ENCODE measurements at regions of chr2 and their contacts with region 1.

Region 1: DNA sequence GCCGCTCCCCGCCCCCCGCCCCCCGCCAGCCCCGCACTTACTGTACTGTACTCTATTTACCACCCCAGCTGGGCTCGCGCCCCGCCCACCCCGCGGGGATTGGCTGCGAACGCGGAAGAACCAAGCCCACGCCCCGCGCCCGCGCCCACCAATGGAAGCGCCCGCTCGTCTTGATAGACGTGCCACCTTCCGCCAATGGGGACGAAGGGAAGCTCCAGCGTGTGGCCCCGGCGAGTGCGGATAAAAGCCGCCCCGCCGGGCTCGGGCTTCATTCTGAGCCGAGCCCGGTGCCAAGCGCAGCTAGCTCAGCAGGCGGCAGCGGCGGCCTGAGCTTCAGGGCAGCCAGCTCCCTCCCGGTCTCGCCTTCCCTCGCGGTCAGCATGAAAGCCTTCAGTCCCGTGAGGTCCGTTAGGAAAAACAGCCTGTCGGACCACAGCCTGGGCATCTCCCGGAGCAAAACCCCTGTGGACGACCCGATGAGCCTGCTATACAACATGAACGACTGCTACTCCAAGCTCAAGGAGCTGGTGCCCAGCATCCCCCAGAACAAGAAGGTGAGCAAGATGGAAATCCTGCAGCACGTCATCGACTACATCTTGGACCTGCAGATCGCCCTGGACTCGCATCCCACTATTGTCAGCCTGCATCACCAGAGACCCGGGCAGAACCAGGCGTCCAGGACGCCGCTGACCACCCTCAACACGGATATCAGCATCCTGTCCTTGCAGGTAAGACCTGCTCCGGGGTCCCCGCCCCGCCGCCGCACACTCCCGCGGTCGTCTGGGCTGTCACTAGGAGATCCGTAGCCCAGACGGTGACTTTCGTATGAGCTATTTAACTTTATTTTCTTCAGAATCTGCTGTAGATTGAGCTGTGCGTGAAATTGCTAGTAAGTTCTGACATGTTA is at the start of gene ID2:
- DNase-seq: peak; percentile 100
- H3K4me3 ChIP-seq: peak within 1 kb of the TSS; percentile 97
- H3K27ac ChIP-seq: peak within 1 kb of the TSS; percentile 91
- H3K4me1 ChIP-seq: peaks cover 39% of the 10 kb centered on the region
- CTCF ChIP-seq: no peak
- total RNA-seq, gene ID2: 439 and 498 TPM in 2 replicates

Region 2: GRCh38 chr2:7097348-7097895 is 1584.6 kb before region 1 on chr2:
- CTCF ChIA-PET with region 1: no interaction called
- POLR2A ChIA-PET with region 1: no interaction called
- intact Hi-C with region 1: loop called (anchors 5 kb)
- DNase-seq: peak; percentile 70
- H3K4me3 ChIP-seq: peak overlapping the region; percentile 49
- H3K27ac ChIP-seq: no peak overlapping the region
- H3K4me1 ChIP-seq: peaks cover 8% of the 10 kb centered on the region
- CTCF ChIP-seq: peak; percentile 99

Region 3: GRCh38 chr2:7633566-7634153 is 1048.4 kb before region 1 on chr2:
- CTCF ChIA-PET with region 1: no interaction called
- POLR2A ChIA-PET with region 1: no interaction called
- intact Hi-C with region 1: loop called (anchors 10 kb)
- DNase-seq: peak; percentile 25
- H3K4me3 ChIP-seq: no peak overlapping the region
- H3K27ac ChIP-seq: peak overlapping the region; percentile 62
- H3K4me1 ChIP-seq: peaks cover 34% of the 10 kb centered on the region
- CTCF ChIP-seq: no peak

Region 4: GRCh38 chr2:8119782-8120505 is 562.1 kb before region 1 on chr2:
- CTCF ChIA-PET with region 1: no interaction called
- POLR2A ChIA-PET with region 1: no interaction called
- intact Hi-C with region 1: loop called (anchors 5 kb)
- DNase-seq: no peak
- H3K4me3 ChIP-seq: no peak overlapping the region
- H3K27ac ChIP-seq: no peak overlapping the region
- H3K4me1 ChIP-seq: peaks cover 28% of the 10 kb centered on the region
- CTCF ChIP-seq: no peak

Region 5: GRCh38 chr2:8514796-8515758 is 167.0 kb before region 1 on chr2:
- CTCF ChIA-PET with region 1: no interaction called
- POLR2A ChIA-PET with region 1: interaction called, 21 read pairs
- intact Hi-C with region 1: no loop called
- DNase-seq: peak; percentile 88
- H3K4me3 ChIP-seq: peak overlapping the region; percentile 47
- H3K27ac ChIP-seq: peak overlapping the region; percentile 95
- H3K4me1 ChIP-seq: peaks cover 68% of the 10 kb centered on the region
- CTCF ChIP-seq: no peak

Region 6: GRCh38 chr2:8551622-8552074 is 130.4 kb before region 1 on chr2:
- CTCF ChIA-PET with region 1: no interaction called
- POLR2A ChIA-PET with region 1: interaction called, 46 read pairs
- intact Hi-C with region 1: no loop called
- DNase-seq: peak; percentile 78
- H3K4me3 ChIP-seq: peak overlapping the region; percentile 62
- H3K27ac ChIP-seq: peak overlapping the region; percentile 98
- H3K4me1 ChIP-seq: peaks cover 97% of the 10 kb centered on the region
- CTCF ChIP-seq: no peak; the same call in 1 of the 2 replicates

Region 7: GRCh38 chr2:8633735-8634313 is 48.2 kb before region 1 on chr2:
- CTCF ChIA-PET with region 1: no interaction called
- POLR2A ChIA-PET with region 1: interaction called, 29 read pairs
- intact Hi-C with region 1: loop called (anchors 1 kb)
- DNase-seq: no peak
- H3K4me3 ChIP-seq: no peak overlapping the region
- H3K27ac ChIP-seq: no peak overlapping the region
- H3K4me1 ChIP-seq: peaks cover 47% of the 10 kb centered on the region
- CTCF ChIP-seq: no peak

Region 8: GRCh38 chr2:8714283-8714682 is 32.2 kb after region 1 on chr2:
- CTCF ChIA-PET with region 1: no interaction called
- POLR2A ChIA-PET with region 1: no interaction called
- intact Hi-C with region 1: no loop called
- DNase-seq: no peak
- H3K4me3 ChIP-seq: no peak overlapping the region
- H3K27ac ChIP-seq: no peak overlapping the region
- H3K4me1 ChIP-seq: no peaks in the 10 kb centered on the region
- CTCF ChIP-seq: no peak

Region 9: GRCh38 chr2:8794923-8795825 is 113.1 kb after region 1 on chr2:
- CTCF ChIA-PET with region 1: no interaction called
- POLR2A ChIA-PET with region 1: no interaction called
- intact Hi-C with region 1: no loop called
- DNase-seq: no peak
- H3K4me3 ChIP-seq: no peak overlapping the region
- H3K27ac ChIP-seq: no peak overlapping the region
- H3K4me1 ChIP-seq: no peaks in the 10 kb centered on the region
- CTCF ChIP-seq: no peak

Measured in OCI-LY7 (cell line).